Stomach (tissue), 19 donors: ENCODE measurements at regions of chr2 and their contacts with region 1.

Region 1: GRCh38 chr2:170973492-170974303 is 44.6 kb downstream of the GORASP2 start:
- DNase-seq: peak; percentile 93 to 96
- H3K4me3 ChIP-seq: peak overlapping the region; percentile 61 to 83 (median 74)
- H3K27ac ChIP-seq: peak overlapping the region; percentile 68 to 90 (median 84)
- H3K4me1 ChIP-seq: peaks cover 15 to 34% (median 22%) of the 10 kb centered on the region in 4 donors
- H3K27me3 ChIP-seq: no peaks in the 10 kb centered on the region
- CTCF ChIP-seq: peak in 5 of 7 experiments; percentile 77 to 98 (median 92)
- EP300 ChIP-seq: no peak
- POLR2A ChIP-seq: no peak

Region 2: GRCh38 chr2:171159372-171160118 is 185.8 kb after region 1 on chr2:
- intact Hi-C with region 1: loop called (anchors 5 kb)
- DNase-seq: peak; percentile 33 to 84
- H3K4me3 ChIP-seq: peak overlapping the region; percentile 90 to 94 (median 92)
- H3K27ac ChIP-seq: peak overlapping the region; percentile 98 to 99 (median 98)
- H3K4me1 ChIP-seq: peaks cover 7 to 68% (median 31%) of the 10 kb centered on the region in 4 donors
- H3K27me3 ChIP-seq: no peaks in the 10 kb centered on the region
- CTCF ChIP-seq: peak in 4 of 7 experiments; percentile 16 to 44 (median 30)
- EP300 ChIP-seq: no peak
- POLR2A ChIP-seq: no peak

Region 3: DNA sequence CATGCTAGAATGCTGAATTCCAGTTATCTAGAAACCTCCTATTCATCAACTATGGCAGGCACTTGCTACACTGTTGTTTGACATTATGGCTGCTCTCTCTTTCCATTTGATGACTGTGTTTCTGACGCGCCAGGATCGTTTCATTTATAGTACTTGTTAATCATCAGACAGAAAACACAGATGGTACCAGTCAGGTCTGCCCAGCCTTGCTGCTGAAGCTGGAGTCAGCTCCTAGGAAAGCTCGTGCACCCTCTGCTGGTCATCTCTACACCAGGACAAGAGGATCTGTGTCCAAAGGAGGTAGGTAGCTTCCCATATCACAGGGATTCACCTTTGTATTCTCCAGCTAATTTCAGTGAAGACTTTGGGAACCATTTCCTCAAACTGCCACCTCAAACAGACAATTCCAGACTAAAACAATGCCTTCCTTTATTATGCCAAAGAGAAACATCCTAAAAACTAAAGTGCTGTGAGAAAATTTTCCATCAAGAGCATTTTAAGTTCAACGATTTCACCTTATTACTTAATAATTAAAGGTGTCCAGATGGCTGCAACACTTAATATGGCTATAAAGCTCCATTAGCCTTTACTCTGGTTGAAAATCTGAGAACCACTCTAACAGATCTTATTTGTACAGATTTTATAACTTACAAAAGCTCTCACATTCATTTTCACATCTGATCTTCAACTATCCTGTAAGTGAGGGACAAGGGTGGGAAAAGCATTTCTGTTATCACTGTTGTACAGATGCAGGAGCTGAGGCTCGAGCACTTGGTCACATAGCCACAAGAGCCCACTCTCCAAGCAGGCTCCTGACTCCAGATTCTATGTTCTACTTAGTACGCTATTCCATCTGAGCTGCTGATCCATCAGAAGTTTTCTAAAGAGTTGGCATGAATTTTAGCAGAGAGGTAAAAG is 442.6 kb after region 1 on chr2:
- intact Hi-C with region 1: loop called (anchors 5 kb)
- DNase-seq: peak; percentile 91 to 96
- H3K4me3 ChIP-seq: peak overlapping the region in 1 of 4 donors; percentile 9
- H3K27ac ChIP-seq: peak overlapping the region in 4 of 5 donors; percentile 34 to 68 (median 41)
- H3K4me1 ChIP-seq: peaks cover 0 to 12% (median 4%) of the 10 kb centered on the region in 4 donors
- H3K27me3 ChIP-seq: no peaks in the 10 kb centered on the region
- CTCF ChIP-seq: peak in 5 of 7 experiments; percentile 64 to 85 (median 77)
- EP300 ChIP-seq: no peak
- POLR2A ChIP-seq: no peak